ENCODE measurements at regions of chr17 and their contacts with region 1.

Region 1: DNA sequence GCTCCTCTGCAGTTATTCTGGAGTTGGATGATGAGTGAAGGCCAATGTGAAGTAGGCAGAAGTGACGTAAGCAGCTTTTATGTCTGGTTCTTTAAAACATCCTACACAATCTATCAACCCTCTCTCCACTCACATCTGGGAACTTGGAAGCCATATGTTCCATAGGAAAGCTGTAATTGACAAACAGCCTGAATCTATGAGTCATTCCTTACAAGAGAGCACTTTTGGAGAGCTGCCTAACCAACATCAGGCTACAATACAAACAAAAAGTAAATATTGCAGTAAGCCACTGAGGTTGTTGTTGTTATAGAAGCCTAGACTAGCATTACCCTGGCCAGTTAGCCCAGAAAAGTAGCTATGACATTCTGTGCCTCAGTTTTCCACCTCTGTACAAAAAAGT is 5.9 kb downstream of the CCL7 start:
- DNase-seq: peak; percentile 95
- H3K4me3 ChIP-seq: no peak overlapping the region
- H3K27ac ChIP-seq: no peak overlapping the region
- H3K27me3 ChIP-seq: peaks cover 2% of the 10 kb centered on the region
- CTCF ChIP-seq: no peak

Region 2: DNA sequence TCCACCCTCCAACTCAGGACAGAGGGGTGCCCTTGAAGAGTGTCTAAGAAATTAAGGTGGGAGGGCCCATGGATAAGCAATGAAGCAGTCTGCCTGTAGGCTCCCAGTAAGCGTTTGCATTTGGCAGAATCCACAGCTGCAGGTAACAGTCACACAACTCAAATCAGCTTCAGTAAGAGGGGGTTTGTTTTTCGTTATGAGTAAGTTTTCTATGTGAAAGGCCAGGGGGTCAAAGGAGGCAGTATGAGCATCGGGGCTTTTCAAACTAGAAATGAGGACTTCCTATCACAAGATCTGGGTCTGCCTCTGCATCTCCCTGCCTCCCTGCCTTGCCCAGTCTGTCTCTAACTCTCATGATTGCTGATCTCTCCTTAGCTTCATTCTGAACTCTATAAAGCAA is 148.9 kb before region 1 on chr17:
- CTCF ChIA-PET with region 1: no interaction called
- POLR2A ChIA-PET with region 1: no interaction called
- DNase-seq: no peak
- H3K4me3 ChIP-seq: no peak overlapping the region
- H3K27ac ChIP-seq: no peak overlapping the region
- H3K27me3 ChIP-seq: no peaks in the 10 kb centered on the region
- CTCF ChIP-seq: no peak

Region 3: GRCh38 chr17:34300652-34301370 is 24.9 kb after region 1 on chr17:
- CTCF ChIA-PET with region 1: interaction called, 3 read pairs
- POLR2A ChIA-PET with region 1: interaction called, 11 read pairs
- DNase-seq: no peak
- H3K4me3 ChIP-seq: no peak overlapping the region
- H3K27ac ChIP-seq: peak overlapping the region; percentile 88
- H3K27me3 ChIP-seq: no peaks in the 10 kb centered on the region
- CTCF ChIP-seq: no peak

Region 4: DNA sequence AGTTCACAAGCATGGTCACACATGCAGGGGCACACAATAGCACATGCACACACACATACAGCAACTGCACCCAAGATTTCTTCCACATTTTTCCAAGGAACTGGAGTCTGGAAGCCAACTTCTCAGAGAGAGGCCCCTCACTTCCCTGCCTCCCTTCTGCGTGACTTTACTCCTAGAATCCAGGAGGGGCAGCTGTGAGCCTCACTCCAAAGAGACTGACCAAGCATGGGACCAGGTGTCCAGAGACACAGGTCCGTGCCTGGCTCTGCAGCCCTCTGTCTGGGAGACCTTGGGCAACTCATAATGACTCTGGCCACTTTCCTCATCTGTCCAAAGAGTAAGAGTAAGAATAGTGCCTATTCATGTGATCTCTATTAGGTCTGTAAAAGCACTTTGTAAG is 198.8 kb after region 1 on chr17:
- CTCF ChIA-PET with region 1: no interaction called
- POLR2A ChIA-PET with region 1: no interaction called
- DNase-seq: no peak
- H3K4me3 ChIP-seq: no peak overlapping the region
- H3K27ac ChIP-seq: no peak overlapping the region
- H3K27me3 ChIP-seq: no peaks in the 10 kb centered on the region
- CTCF ChIP-seq: no peak

Region 5: GRCh38 chr17:35022536-35023063 is 746.7 kb after region 1 on chr17:
- CTCF ChIA-PET with region 1: no interaction called
- POLR2A ChIA-PET with region 1: no interaction called
- DNase-seq: peak; percentile 65
- H3K4me3 ChIP-seq: no peak overlapping the region
- H3K27ac ChIP-seq: peak overlapping the region; percentile 91
- H3K27me3 ChIP-seq: no peaks in the 10 kb centered on the region
- CTCF ChIP-seq: peak; percentile 58

Region 6: GRCh38 chr17:35299129-35299528 is 1023.2 kb after region 1 on chr17:
- CTCF ChIA-PET with region 1: no interaction called
- POLR2A ChIA-PET with region 1: no interaction called
- DNase-seq: no peak
- H3K4me3 ChIP-seq: no peak overlapping the region
- H3K27ac ChIP-seq: no peak overlapping the region
- H3K27me3 ChIP-seq: no peaks in the 10 kb centered on the region
- CTCF ChIP-seq: no peak